Activated CD8-positive, alpha-beta T cell treated with anti-CD3 and anti-CD28 coated beads for 36 hours (primary cell): ENCODE measurements at regions of chr2 and their contacts with region 1.

Region 1: GRCh38 chr2:9984217-9984739 is 32.8 kb downstream of the GRHL1 start:
- DNase-seq: peak; percentile 30
- ATAC-seq: peak; percentile 93
- H3K4me3 Mint-ChIP-seq: no peak overlapping the region
- H3K27ac Mint-ChIP-seq: no peak overlapping the region
- H3K4me1 Mint-ChIP-seq: peaks cover 12% of the 10 kb centered on the region
- H3K27me3 Mint-ChIP-seq: peaks cover 12% of the 10 kb centered on the region
- CTCF ChIP-seq: peak; percentile 91

Region 2: GRCh38 chr2:9965119-9965822 is 19.0 kb before region 1 on chr2:
- CTCF ChIA-PET with region 1: interaction called, 37 read pairs
- POLR2A ChIA-PET with region 1: no interaction called
- intact Hi-C with region 1: no loop called
- DNase-seq: no peak
- ATAC-seq: no peak
- H3K4me3 Mint-ChIP-seq: no peak overlapping the region
- H3K27ac Mint-ChIP-seq: no peak overlapping the region
- H3K4me1 Mint-ChIP-seq: peaks cover 6% of the 10 kb centered on the region
- H3K27me3 Mint-ChIP-seq: no peaks in the 10 kb centered on the region
- CTCF ChIP-seq: no peak

Region 3: GRCh38 chr2:10028988-10029874 is 45.0 kb after region 1 on chr2:
- CTCF ChIA-PET with region 1: interaction called, 44 read pairs
- POLR2A ChIA-PET with region 1: no interaction called
- intact Hi-C with region 1: no loop called
- DNase-seq: peak; percentile 86
- ATAC-seq: peak; percentile 99
- H3K4me3 Mint-ChIP-seq: peak overlapping the region; percentile 63
- H3K27ac Mint-ChIP-seq: peak overlapping the region; percentile 77
- H3K4me1 Mint-ChIP-seq: peaks cover 18% of the 10 kb centered on the region
- H3K27me3 Mint-ChIP-seq: no peaks in the 10 kb centered on the region
- CTCF ChIP-seq: no peak

Region 4: DNA sequence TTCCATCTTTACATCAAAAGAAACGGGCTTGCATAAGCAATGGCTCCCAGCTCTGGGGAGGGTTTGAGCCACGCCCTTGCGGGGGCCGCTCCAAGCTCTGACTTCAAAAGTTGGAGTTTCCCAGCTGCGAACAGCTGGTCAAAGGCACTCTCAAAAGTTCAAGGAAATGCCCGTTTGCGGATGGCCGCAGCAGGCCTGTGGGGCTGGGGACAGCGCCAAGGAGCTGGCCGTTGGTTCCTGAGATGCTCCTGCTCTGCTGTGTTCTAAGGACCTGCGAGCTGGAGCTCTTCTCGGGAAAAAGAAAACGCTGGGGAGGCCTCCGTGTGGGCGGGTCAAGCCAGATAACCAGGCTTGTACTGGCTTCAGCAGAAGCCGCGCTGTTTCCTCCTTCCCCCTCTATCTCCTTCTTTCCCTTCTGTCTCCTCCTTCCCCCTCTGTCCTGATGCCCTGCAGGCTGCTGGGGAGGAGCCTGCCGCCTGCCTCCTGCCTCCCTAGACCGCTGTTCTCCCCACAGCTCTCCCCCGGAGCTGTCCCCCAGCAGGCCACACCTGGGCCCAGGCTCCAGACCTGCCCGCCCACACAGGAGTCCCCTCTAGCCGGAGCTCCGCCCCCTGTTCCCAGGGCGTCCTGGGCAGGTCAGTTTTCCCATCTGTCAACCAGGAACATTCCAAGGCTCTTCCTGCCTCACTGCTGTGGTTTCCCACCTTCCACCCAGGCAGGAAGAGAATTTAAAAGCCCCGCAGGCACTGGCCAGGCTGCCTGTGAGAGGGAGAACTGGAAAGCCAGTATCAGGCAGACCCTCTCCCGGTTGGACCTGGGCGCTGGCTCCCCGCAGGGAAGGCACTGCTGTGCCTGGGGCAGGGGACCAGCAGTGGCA is 73.2 kb after region 1 on chr2:
- CTCF ChIA-PET with region 1: interaction called, 27 read pairs
- POLR2A ChIA-PET with region 1: interaction called, 3 read pairs
- intact Hi-C with region 1: no loop called
- DNase-seq: peak; percentile 65
- ATAC-seq: peak; percentile 67
- H3K4me3 Mint-ChIP-seq: no peak overlapping the region
- H3K27ac Mint-ChIP-seq: no peak overlapping the region
- H3K4me1 Mint-ChIP-seq: peaks cover 6% of the 10 kb centered on the region
- H3K27me3 Mint-ChIP-seq: peaks cover 2% of the 10 kb centered on the region
- CTCF ChIP-seq: no peak